ENCODE measurements at regions of chr19 and their contacts with region 1.

Region 1: GRCh38 chr19:47124937-47125668 is 5.5 kb upstream of the SAE1 start:
- DNase-seq: peak; percentile 78
- ATAC-seq: peak; percentile 78
- H3K4me3 ChIP-seq: peak overlapping the region in 1 of 3 experiments; percentile 29; a peak in 2 of 6 replicates
- H3K27ac ChIP-seq: peak overlapping the region; percentile 21
- H3K4me1 ChIP-seq: peaks cover 37% of the 10 kb centered on the region
- H3K27me3 ChIP-seq: no peaks in the 10 kb centered on the region
- CTCF ChIP-seq: peak; percentile 84
- EP300 ChIP-seq: no peak
- POLR2A ChIP-seq: no peak
- RAD21 ChIP-seq: peak; percentile 82

Region 2: GRCh38 chr19:47019431-47020041 is 105.6 kb before region 1 on chr19 and contains the start of gene NPAS1:
- CTCF ChIA-PET with region 1: no interaction called
- POLR2A ChIA-PET with region 1: no interaction called
- in situ Hi-C with region 1: loop called (anchors 10 kb)
- intact Hi-C with region 1: no loop called
- DNase-seq: no peak
- ATAC-seq: peak; percentile 59
- H3K4me3 ChIP-seq: peak within 1 kb of the TSS; percentile 52 to 77 (median 56)
- H3K27ac ChIP-seq: no peak within 1 kb of the TSS
- H3K4me1 ChIP-seq: peaks cover 21% of the 10 kb centered on the region
- H3K27me3 ChIP-seq: peaks cover 1 to 11% of the 10 kb centered on the region in 2 experiments; a peak in 1 of 5 replicates
- CTCF ChIP-seq: no peak
- EP300 ChIP-seq: no peak
- POLR2A ChIP-seq: no peak
- RAD21 ChIP-seq: no peak
- total RNA-seq, gene NPAS1: 0.29 and 0.35 TPM in 2 replicates

Region 3: GRCh38 chr19:47035127-47036096 is 89.7 kb before region 1 on chr19:
- CTCF ChIA-PET with region 1: interaction called, 3 read pairs
- POLR2A ChIA-PET with region 1: no interaction called
- in situ Hi-C with region 1: no loop called
- intact Hi-C with region 1: loop called (anchors 1 kb)
- DNase-seq: peak; percentile 52
- ATAC-seq: peak; percentile 73
- H3K4me3 ChIP-seq: peak overlapping the region; percentile 14 to 65 (median 60); a peak in 5 of 6 replicates
- H3K27ac ChIP-seq: no peak overlapping the region
- H3K4me1 ChIP-seq: peaks cover 29% of the 10 kb centered on the region
- H3K27me3 ChIP-seq: no peaks in the 10 kb centered on the region
- CTCF ChIP-seq: peak; percentile 94
- EP300 ChIP-seq: no peak
- POLR2A ChIP-seq: peak in 1 of 2 experiments; percentile 35; a peak in 1 of 4 replicates
- RAD21 ChIP-seq: peak; percentile 71

Region 4: GRCh38 chr19:47063874-47064273 is 61.2 kb before region 1 on chr19:
- CTCF ChIA-PET with region 1: no interaction called
- POLR2A ChIA-PET with region 1: no interaction called
- in situ Hi-C with region 1: no loop called
- intact Hi-C with region 1: no loop called
- DNase-seq: no peak
- ATAC-seq: no peak
- H3K4me3 ChIP-seq: no peak overlapping the region
- H3K27ac ChIP-seq: no peak overlapping the region
- H3K4me1 ChIP-seq: peaks cover 12% of the 10 kb centered on the region
- H3K27me3 ChIP-seq: no peaks in the 10 kb centered on the region
- CTCF ChIP-seq: no peak
- EP300 ChIP-seq: no peak
- POLR2A ChIP-seq: no peak
- RAD21 ChIP-seq: no peak

Region 5: DNA sequence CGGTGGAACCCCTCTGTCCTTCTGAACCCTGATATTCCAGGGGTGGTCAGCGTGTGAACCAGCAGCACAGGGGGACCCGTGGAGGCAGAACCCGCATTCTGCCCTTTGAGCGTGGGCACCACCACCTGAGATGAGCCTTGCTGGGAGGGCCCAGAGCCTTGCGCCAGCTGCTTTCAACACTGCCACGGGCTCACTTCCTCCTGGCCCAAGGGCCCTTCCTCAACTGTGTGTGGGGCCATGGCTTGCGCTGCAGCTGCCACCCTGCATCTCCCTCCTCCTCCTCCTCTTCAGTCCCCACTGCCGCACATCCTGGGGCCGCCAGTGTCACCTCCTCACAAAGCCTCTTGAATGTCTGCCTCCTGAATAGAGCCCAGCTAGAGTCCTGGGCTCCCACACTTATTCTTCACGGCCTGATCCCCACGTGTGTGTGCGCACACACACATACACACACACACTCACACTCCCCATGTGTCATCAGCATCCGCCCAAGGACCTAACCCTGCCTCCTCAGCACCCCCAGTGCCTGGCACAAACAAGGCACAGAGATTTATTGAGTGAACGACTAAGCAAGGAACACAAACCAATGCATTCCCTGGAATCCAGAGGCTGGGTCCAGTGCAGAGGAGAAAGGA is 49.8 kb before region 1 on chr19:
- CTCF ChIA-PET with region 1: interaction called, 54 read pairs
- POLR2A ChIA-PET with region 1: interaction called, 19 read pairs
- in situ Hi-C with region 1: loop called (anchors 5 kb)
- intact Hi-C with region 1: loop called (anchors 1 kb)
- DNase-seq: no peak
- ATAC-seq: no peak
- H3K4me3 ChIP-seq: no peak overlapping the region
- H3K27ac ChIP-seq: no peak overlapping the region
- H3K4me1 ChIP-seq: peaks cover 7% of the 10 kb centered on the region
- H3K27me3 ChIP-seq: no peaks in the 10 kb centered on the region; a peak in 1 of 5 replicates
- CTCF ChIP-seq: no peak
- EP300 ChIP-seq: no peak
- POLR2A ChIP-seq: no peak
- RAD21 ChIP-seq: no peak

Region 6: DNA sequence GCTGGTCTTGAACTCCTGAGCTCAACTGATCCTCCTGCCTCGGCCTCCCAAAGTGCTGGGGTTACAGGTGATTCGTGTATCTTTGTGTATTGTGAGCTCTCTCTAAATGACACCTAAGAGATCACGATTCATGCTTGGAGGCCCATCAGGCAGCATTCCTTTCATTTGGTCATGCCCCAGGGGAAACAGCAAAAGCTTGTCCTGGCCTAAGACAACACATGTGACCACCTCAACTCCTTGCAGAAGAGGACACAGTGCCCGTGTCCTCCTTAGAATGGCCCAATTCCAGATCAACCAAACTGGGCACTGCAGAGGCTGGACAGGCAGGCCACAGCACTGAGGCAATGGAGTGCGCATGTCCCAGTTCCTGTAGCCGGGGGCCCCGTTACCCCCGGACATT is 44.0 kb before region 1 on chr19:
- CTCF ChIA-PET with region 1: interaction called, 54 read pairs
- POLR2A ChIA-PET with region 1: interaction called, 19 read pairs
- in situ Hi-C with region 1: loop called (anchors 5 kb)
- intact Hi-C with region 1: loop called (anchors 1 kb)
- DNase-seq: no peak
- ATAC-seq: no peak
- H3K4me3 ChIP-seq: no peak overlapping the region
- H3K27ac ChIP-seq: no peak overlapping the region
- H3K4me1 ChIP-seq: peaks cover 7% of the 10 kb centered on the region
- H3K27me3 ChIP-seq: no peaks in the 10 kb centered on the region
- CTCF ChIP-seq: no peak
- EP300 ChIP-seq: no peak
- POLR2A ChIP-seq: no peak
- RAD21 ChIP-seq: no peak

Measured in HepG2 (cell line).